CD4-positive, alpha-beta memory T cell (primary cell): ENCODE measurements at regions of chr11 and their contacts with region 1.

Region 1: DNA sequence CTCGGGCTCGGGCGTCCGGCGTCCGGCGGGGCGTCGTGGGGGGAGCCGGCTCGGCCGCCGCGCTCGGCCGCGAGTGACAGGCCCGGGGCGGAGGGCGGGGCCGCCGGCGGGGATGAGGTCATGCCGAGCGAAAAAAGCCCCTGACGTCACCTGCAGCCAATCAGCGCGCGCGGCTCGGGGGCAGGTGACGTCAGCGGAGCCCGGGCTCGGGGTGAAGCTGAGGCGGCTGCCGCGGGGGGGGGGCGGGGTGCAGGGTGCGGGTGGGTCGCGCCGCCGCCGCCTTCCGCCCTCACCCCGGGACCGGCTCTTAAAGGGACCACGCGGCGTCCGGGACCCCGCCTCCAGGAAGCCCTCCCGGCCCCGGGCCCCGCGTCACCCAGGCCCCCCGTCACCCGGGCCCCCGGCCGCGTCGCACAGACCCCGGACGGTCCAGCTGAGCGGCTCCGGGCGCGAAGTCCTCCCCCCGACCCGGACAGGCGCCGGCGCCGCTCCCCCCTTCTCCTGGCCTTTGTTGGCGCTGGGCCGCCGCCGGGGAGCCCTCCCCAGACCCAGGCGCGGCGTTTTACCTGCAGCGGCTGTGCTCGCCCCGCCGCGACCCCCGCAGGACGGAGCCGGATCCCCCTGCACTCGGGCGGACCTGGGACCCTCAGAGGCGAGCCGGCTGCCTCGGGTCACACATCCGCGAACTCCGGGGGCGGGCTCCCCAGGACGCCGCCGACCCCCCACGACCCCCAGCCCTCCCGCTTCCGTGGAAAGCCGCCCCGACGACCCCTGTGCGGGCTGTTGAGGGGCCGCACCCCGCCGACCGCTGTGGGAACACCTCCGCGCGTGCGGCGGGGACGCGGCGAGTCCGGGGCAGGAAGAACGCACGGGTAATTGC is at the start of gene DUSP8:
- DNase-seq: peak; percentile 94 to 96 (median 96)
- H3K4me3 ChIP-seq: peak within 1 kb of the TSS; percentile 42 to 58
- H3K4me3 Mint-ChIP-seq: peak within 1 kb of the TSS; percentile 73 to 95 (median 86)
- H3K27ac ChIP-seq: peak within 1 kb of the TSS; percentile 92
- H3K27ac Mint-ChIP-seq: peak within 1 kb of the TSS; percentile 86 to 97 (median 95)
- H3K4me1 ChIP-seq: peaks cover 30% of the 10 kb centered on the region
- H3K4me1 Mint-ChIP-seq: peaks cover 7 to 33% (median 10%) of the 10 kb centered on the region in 4 donors
- H3K27me3 ChIP-seq: no peaks in the 10 kb centered on the region
- H3K27me3 Mint-ChIP-seq: no peaks in the 10 kb centered on the region
- total RNA-seq, gene DUSP8: 5.8 TPM

Region 2: DNA sequence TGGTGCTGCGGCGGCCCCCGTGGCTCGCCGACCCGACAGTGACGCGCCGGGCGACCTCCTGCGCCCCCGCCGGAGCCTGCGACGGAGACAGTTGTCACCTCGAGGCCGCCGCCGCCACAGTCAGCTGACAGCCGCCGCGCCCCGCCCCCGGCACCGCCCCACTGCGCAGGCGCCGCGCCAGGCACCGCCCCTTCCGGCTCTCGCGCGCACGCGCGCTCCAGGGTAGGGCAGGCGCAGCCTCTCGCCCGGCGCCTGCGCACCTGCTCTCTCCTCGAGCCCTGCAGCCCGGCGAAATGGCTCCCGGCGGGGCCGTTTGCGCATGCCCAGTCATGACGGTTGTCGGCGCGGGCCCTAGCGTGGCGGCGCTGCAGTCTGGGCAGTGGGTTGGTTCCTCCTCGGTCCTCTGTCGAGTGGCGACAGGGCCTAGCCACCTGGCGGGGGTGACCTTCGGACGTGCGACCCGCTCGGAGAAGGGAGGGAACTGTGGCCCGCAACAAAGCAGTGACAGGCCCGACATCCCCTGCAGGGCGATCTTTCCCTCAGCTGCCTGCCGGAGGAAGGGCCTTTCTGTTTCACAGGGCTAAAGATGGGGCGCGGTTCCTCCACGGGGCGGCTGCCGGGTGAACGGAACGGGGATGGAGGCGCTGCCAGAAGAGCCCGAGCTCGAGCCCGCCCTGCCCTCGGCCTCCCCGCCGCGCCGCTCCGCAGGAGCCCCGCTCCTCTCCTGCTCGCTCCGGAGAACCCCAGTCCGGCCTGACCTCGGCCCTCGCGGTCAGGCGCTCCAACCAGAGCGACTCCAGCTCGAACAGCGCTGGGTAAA is 262.7 kb before region 1 on chr11 and contains the start of gene TOLLIP:
- CTCF ChIA-PET with region 1: interaction called, 5 read pairs
- POLR2A ChIA-PET with region 1: interaction called, 14 read pairs
- intact Hi-C with region 1: loop called (anchors 2 kb)
- DNase-seq: peak; percentile 96 to 100 (median 98)
- H3K4me3 ChIP-seq: peak within 1 kb of the TSS; percentile 43 to 63
- H3K4me3 Mint-ChIP-seq: peak within 1 kb of the TSS; percentile 86 to 91 (median 89)
- H3K27ac ChIP-seq: peak within 1 kb of the TSS; percentile 83
- H3K27ac Mint-ChIP-seq: peak within 1 kb of the TSS; percentile 74 to 98 (median 96)
- H3K4me1 ChIP-seq: peaks cover 45% of the 10 kb centered on the region
- H3K4me1 Mint-ChIP-seq: peaks cover 17 to 55% (median 34%) of the 10 kb centered on the region in 4 donors
- H3K27me3 ChIP-seq: no peaks in the 10 kb centered on the region
- H3K27me3 Mint-ChIP-seq: no peaks in the 10 kb centered on the region
- total RNA-seq, gene TOLLIP: 49.3 to 51.4 TPM

Region 3: DNA sequence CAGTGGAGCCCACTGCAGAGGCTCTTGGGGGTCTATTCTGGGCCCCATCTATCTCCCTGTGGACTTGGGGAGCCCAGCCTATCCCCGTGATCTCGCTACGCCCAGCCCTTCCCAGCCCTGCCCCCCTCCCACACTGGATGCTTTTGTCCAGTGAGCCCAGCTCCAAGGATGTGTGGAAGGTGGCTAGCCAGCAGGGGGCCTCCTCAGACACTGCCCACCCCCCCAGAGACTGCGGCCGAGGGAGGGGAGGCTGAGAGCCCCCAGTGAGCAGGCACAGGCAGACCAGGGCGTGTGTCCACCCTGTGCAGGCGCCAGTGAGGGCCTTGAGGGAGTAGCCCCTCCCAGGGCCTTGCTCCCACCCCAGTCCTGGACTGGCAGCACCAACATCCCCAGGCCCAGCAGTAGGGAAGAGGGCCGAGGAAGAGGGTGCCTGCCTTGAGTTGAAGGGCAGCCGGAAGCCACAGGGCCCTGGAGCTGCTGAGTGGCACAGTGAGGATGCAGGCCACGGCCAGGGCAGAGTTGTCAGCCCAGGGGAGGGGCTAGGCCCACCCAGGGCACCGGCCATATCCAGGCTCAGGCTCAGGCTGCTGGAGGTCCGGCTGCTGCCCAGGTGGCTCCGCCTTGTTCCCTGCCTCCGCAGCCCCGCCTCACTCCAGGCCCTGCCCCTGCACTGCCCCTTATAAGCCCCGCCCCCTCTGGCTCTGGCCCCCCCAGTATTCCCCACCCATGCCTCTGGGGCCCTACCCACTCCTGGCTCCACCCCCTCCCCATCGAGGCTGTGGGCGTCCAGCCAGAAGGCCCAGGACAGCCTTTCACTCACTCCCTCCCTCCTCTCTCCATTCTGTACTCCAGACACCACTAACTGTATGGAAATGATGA is 113.9 kb before region 1 on chr11:
- CTCF ChIA-PET with region 1: interaction called, 3 read pairs
- POLR2A ChIA-PET with region 1: interaction called, 6 read pairs
- intact Hi-C with region 1: loop called (anchors 1 kb)
- DNase-seq: no peak
- H3K4me3 ChIP-seq: no peak overlapping the region
- H3K4me3 Mint-ChIP-seq: no peak overlapping the region
- H3K27ac ChIP-seq: no peak overlapping the region
- H3K27ac Mint-ChIP-seq: no peak overlapping the region
- H3K4me1 ChIP-seq: no peaks in the 10 kb centered on the region
- H3K4me1 Mint-ChIP-seq: no peaks in the 10 kb centered on the region
- H3K27me3 ChIP-seq: no peaks in the 10 kb centered on the region
- H3K27me3 Mint-ChIP-seq: no peaks in the 10 kb centered on the region

Region 4: GRCh38 chr11:1546536-1547400 is 25.7 kb before region 1 on chr11:
- CTCF ChIA-PET with region 1: interaction called, 54 read pairs
- POLR2A ChIA-PET with region 1: interaction called, 54 read pairs
- intact Hi-C with region 1: loop called (anchors 1 kb)
- DNase-seq: peak in 4 of 5 donors; percentile 40 to 59 (median 52)
- H3K4me3 ChIP-seq: no peak overlapping the region
- H3K4me3 Mint-ChIP-seq: peak overlapping the region in 1 of 8 donors; percentile 31
- H3K27ac ChIP-seq: no peak overlapping the region
- H3K27ac Mint-ChIP-seq: no peak overlapping the region
- H3K4me1 ChIP-seq: peaks cover 16% of the 10 kb centered on the region
- H3K4me1 Mint-ChIP-seq: peaks cover 0 to 10% (median 4%) of the 10 kb centered on the region in 4 donors
- H3K27me3 ChIP-seq: peaks cover 12% of the 10 kb centered on the region
- H3K27me3 Mint-ChIP-seq: peaks cover 7 to 16% of the 10 kb centered on the region in 2 donors

Region 5: DNA sequence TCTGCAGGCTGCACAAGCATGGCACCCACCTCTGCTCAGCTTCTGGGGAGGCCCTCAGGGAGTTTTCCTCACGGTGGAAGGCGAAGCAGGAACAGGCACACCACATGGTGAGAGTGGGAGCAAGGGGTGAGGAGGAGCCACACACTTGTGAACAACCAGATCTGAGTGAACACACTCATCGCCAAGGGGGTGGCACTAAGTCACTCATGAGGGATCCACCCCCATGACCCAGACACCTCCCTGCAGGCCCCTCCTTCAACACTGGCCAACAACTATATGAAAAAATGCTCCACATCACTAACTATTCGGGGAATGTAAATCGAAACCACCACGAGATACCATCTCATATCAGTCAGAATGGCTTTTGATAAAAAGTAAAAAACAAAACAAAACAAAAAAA is 26.4 kb after region 1 on chr11:
- CTCF ChIA-PET with region 1: interaction called, 39 read pairs
- POLR2A ChIA-PET with region 1: interaction called, 8 read pairs
- intact Hi-C with region 1: no loop called
- DNase-seq: peak in 3 of 5 donors; percentile 9 to 56 (median 36)
- H3K4me3 ChIP-seq: no peak overlapping the region
- H3K4me3 Mint-ChIP-seq: peak overlapping the region in 4 of 8 donors; percentile 1 to 48 (median 15)
- H3K27ac ChIP-seq: no peak overlapping the region
- H3K27ac Mint-ChIP-seq: peak overlapping the region in 3 of 7 donors; percentile 8 to 65 (median 19)
- H3K4me1 ChIP-seq: no peaks in the 10 kb centered on the region
- H3K4me1 Mint-ChIP-seq: peaks cover 11 to 34% (median 13%) of the 10 kb centered on the region in 4 donors
- H3K27me3 ChIP-seq: no peaks in the 10 kb centered on the region
- H3K27me3 Mint-ChIP-seq: peaks cover 12 to 18% of the 10 kb centered on the region in 2 donors